H1 (cell line): ENCODE measurements at regions of chr2 and their contacts with region 1.

Region 1: DNA sequence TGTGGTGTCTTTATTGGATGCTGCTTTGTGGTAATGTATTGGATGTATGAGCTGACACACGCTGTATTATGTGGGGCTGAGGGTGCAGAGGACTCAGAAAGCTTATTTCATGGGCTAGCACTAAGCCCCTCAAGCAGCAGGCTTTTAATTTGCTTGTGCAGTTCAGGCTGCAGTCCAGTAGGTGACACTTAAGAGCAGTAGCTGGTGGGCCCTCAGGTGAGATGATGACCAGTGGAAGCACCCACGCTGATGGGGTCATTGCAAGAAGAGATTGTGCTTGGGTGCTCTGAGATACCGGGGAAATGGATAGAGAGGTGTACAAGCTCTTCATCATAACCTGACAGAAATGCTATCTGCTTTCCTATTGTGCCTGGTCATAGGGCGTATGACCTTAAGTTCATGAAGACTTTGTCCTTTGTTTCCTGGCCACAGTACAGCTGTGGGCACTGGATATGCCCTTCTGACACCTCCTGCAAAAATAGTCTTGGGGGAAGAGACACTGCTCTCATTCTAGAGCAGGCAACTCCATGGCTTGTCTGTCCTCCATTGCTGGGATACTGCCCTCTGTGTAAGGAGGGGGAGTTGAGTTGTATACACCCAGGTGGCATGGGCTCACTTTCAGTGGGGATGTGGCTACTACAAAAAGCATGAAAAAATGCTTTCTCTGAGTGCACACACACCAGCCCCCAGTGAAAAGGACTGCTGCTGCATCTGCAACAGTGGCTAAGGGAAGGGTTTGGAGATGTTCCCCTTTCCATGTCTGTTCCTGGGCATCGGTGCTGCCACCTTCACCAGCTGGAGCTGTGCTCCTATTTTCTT is 205.7 kb upstream of the ZSWIM2 start:
- DNase-seq: no peak
- H3K4me3 ChIP-seq: no peak overlapping the region
- H3K27ac ChIP-seq: no peak overlapping the region
- H3K4me1 ChIP-seq: no peaks in the 10 kb centered on the region
- H3K27me3 ChIP-seq: no peaks in the 10 kb centered on the region
- CTCF ChIP-seq: peak; percentile 25 to 60 (median 27); a peak in 3 of 4 replicates
- EP300 ChIP-seq: no peak
- POLR2A ChIP-seq: no peak
- RAD21 ChIP-seq: peak; percentile 47 to 63

Region 2: GRCh38 chr2:187037310-187037709 is 17.4 kb before region 1 on chr2:
- CTCF ChIA-PET with region 1: interaction called, 20 read pairs
- POLR2A ChIA-PET with region 1: no interaction called
- DNase-seq: no peak
- H3K4me3 ChIP-seq: no peak overlapping the region
- H3K27ac ChIP-seq: no peak overlapping the region
- H3K4me1 ChIP-seq: no peaks in the 10 kb centered on the region
- H3K27me3 ChIP-seq: no peaks in the 10 kb centered on the region
- CTCF ChIP-seq: no peak
- EP300 ChIP-seq: no peak
- POLR2A ChIP-seq: no peak
- RAD21 ChIP-seq: no peak

Region 3: DNA sequence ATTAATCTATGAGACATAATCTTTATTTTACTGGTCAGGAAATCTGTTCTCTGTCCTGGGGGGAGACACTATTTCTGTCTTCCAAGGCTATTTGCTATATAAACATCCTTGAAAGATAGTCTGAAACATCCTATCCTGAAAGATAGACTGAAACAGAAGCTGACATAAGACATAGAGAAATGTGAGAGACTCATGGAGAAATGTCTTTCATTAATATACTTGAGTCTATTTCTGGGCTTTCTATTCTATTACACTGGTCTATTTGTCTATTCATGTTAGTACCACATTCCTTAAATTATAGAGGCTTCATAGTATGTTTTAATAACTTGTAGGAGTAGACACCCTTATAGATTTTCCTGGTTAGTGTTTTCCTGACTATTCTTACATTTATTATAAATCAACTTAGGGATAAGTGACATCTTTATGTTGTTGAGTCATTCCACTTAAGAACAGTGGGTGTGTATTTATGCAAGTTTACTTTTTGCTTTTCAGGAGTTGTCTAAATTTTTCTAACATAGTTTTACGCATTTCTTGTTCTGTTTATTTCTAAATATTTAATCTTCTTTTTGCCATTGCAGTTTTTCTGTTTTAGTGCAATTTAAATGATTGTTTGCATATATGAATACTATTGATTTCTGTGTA is 39.2 kb after region 1 on chr2:
- CTCF ChIA-PET with region 1: no interaction called
- POLR2A ChIA-PET with region 1: no interaction called
- DNase-seq: no peak
- H3K4me3 ChIP-seq: no peak overlapping the region
- H3K27ac ChIP-seq: no peak overlapping the region
- H3K4me1 ChIP-seq: no peaks in the 10 kb centered on the region
- H3K27me3 ChIP-seq: no peaks in the 10 kb centered on the region
- CTCF ChIP-seq: no peak
- EP300 ChIP-seq: no peak
- POLR2A ChIP-seq: no peak
- RAD21 ChIP-seq: no peak

Region 4: GRCh38 chr2:187150670-187151069 is 96.0 kb after region 1 on chr2:
- CTCF ChIA-PET with region 1: no interaction called
- POLR2A ChIA-PET with region 1: no interaction called
- DNase-seq: no peak
- H3K4me3 ChIP-seq: no peak overlapping the region
- H3K27ac ChIP-seq: no peak overlapping the region
- H3K4me1 ChIP-seq: no peaks in the 10 kb centered on the region
- H3K27me3 ChIP-seq: no peaks in the 10 kb centered on the region
- CTCF ChIP-seq: no peak
- EP300 ChIP-seq: no peak
- POLR2A ChIP-seq: no peak
- RAD21 ChIP-seq: no peak

Region 5: DNA sequence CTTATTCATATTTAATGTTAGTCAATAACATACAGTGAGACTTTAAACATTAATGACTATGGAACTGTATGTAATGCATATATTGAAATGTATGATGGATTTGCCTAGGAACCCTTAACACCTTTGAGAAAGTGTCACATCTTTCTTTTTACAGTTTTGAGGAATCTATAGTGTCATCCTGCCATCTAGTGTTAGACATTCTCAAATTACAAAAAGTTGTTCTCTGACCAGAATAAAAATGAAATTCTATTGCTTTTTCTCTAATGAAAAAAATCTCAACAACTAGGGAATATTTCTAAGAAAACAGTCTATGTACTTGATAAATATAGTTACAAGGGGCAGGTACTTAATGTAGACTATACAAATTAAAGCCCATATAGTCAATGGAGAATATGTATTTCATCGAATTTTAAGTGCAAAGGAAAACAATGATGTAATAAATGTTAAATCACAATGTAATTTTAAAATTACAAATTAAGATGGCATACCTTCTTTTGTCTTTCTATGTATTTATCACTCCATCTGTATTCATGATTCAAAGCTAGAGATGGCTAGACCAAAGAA is 398.4 kb after region 1 on chr2:
- CTCF ChIA-PET with region 1: interaction called, 14 read pairs
- POLR2A ChIA-PET with region 1: no interaction called
- DNase-seq: no peak
- H3K4me3 ChIP-seq: no peak overlapping the region
- H3K27ac ChIP-seq: no peak overlapping the region
- H3K4me1 ChIP-seq: peaks cover 0 to 2% (median 1%) of the 10 kb centered on the region in 4 experiments; a peak in 2 of 7 replicates
- H3K27me3 ChIP-seq: no peaks in the 10 kb centered on the region
- CTCF ChIP-seq: peak in 2 of 3 experiments; percentile 23 to 25; a peak in 2 of 4 replicates
- EP300 ChIP-seq: no peak
- POLR2A ChIP-seq: no peak
- RAD21 ChIP-seq: peak; percentile 70 to 80